SK-N-SH (cell line): ENCODE measurements at regions of chr11 and their contacts with region 1.

Region 1: DNA sequence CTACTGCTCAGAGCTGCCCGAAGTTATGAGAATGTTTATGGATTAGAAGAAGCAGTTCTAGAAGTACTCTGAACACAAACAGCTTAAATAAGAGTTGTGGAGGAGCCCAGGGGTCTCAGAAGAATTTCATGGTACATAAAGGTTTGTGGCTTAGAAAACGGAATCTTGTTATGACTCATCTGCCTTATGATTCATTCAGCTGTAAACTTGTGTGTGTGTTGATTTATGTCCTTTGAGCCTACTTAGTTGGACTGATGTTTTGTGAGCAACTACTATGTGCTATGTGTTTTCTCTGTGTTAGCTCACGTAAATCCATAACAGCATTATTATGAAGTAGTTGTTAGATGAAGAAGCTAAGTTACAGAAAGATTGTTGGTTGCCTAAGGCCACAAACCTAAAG is 203.7 kb downstream of the PGR start:
- DNase-seq: no peak
- H3K4me3 ChIP-seq: no peak overlapping the region
- H3K27ac ChIP-seq: no peak overlapping the region
- H3K4me1 ChIP-seq: no peaks in the 10 kb centered on the region
- H3K27me3 ChIP-seq: no peaks in the 10 kb centered on the region
- CTCF ChIP-seq: no peak
- EP300 ChIP-seq: 0 out of 4 replicates have a peak, but pooled peaks of 1 of the 2 experiments have one; percentile 13
- RAD21 ChIP-seq: no peak

Region 2: DNA sequence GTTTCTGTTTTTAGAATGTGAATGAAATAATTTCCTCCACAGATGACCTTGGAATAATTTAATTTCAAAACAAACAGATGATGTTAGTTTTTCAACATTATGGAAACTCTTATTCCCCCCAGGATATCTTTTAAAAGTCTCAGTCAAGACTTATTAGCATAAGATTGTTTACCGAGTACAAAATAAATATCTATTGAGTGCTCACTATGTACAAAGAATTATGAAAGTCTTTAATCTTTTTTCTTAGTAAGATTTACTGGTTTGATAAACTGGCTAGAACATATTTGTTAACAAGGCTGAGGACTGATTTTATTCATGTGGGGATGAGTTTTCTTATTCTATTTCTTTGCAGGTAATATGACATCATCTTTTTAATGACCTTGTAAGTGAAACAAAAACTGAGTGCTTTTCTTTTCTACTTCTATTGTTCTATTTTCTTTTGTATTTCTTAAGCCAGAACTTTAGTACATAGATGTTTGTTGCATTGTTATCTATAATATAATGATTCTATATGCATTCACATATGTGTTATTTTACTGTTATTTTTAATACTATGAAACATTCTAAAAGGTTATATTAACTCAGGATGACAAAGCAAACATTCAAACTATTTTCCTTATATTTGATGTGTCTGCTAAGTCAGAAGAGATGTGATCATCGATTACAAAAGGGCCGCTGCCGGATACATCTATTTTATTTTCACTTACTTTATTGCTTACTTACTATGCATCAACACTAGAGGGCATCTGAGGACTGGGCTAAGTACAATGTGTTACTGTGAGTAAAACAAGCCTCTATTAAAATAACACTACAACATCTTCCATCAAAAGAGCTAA is 349.8 kb before region 1 on chr11:
- CTCF ChIA-PET with region 1: interaction called, 11 read pairs
- POLR2A ChIA-PET with region 1: no interaction called
- DNase-seq: peak; percentile 16
- H3K4me3 ChIP-seq: peak overlapping the region in 1 of 2 experiments; percentile 14; a peak in 1 of 4 replicates
- H3K27ac ChIP-seq: no peak overlapping the region
- H3K4me1 ChIP-seq: no peaks in the 10 kb centered on the region
- H3K27me3 ChIP-seq: peaks cover 12% of the 10 kb centered on the region; the same call in 1 of the 2 replicates
- CTCF ChIP-seq: peak; percentile 89
- EP300 ChIP-seq: no peak
- RAD21 ChIP-seq: peak; percentile 80

Region 3: GRCh38 chr11:100739666-100740065 is 186.3 kb before region 1 on chr11:
- CTCF ChIA-PET with region 1: no interaction called
- POLR2A ChIA-PET with region 1: no interaction called
- DNase-seq: no peak
- H3K4me3 ChIP-seq: no peak overlapping the region
- H3K27ac ChIP-seq: no peak overlapping the region
- H3K4me1 ChIP-seq: no peaks in the 10 kb centered on the region; a peak in 1 of 4 replicates
- H3K27me3 ChIP-seq: peaks cover 7% of the 10 kb centered on the region
- CTCF ChIP-seq: no peak
- EP300 ChIP-seq: no peak
- RAD21 ChIP-seq: no peak

Region 4: DNA sequence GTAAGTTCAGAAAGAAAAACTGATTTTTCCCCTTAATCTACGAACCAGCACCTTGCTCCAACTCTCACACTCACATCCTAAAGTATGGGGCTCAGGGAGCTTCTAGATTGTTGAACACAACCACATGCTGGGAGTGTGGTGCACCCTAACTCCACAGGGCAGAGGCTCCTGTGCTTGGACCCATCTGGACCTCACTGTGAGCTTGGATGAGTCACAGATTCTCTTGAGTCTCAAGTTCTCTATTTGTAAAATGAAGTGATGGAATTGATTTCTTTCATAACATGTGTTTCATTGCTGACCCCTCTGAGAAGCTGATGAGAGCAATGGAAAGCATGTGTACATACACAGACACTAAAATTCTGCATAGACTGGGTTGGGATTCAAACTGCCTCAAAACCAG is 93.9 kb after region 1 on chr11:
- CTCF ChIA-PET with region 1: no interaction called
- POLR2A ChIA-PET with region 1: no interaction called
- DNase-seq: no peak
- H3K4me3 ChIP-seq: no peak overlapping the region
- H3K27ac ChIP-seq: no peak overlapping the region
- H3K4me1 ChIP-seq: no peaks in the 10 kb centered on the region
- H3K27me3 ChIP-seq: no peaks in the 10 kb centered on the region
- CTCF ChIP-seq: no peak
- EP300 ChIP-seq: no peak
- RAD21 ChIP-seq: no peak